ENCODE measurements at regions of chr3 and their contacts with region 1.

Region 1: DNA sequence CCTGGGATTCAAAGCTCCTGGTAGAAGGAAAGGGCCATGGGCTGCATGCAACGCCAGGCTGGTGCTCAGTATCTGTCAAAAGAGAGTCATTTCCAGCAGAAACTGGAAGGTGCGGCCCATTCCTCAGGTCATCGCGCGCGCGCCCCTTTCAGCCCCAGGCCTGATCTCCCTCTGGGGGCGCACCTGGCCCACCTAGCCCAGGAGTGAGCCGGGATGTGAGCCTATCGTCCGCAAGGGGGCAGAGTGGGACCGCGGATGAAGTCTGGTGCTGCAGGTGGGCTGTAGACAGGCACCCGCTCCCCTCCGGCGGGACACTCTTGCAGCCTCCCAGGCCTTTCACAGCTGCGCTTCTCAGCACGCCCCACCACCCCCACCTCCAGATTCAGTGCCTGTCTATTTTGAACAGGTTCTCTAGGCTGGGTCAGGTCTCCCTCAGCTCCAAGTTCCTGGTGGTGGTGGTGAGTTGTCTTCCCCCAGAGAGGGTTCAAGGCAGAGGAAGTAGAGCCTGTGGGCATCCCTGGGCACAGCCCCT is 5.8 kb upstream of the RPL29 start:
- DNase-seq: peak; percentile 92

Region 2: GRCh38 chr3:52014613-52015012 is 13.1 kb after region 1 on chr3:
- CTCF ChIA-PET with region 1: interaction called, 14 read pairs
- POLR2A ChIA-PET with region 1: no interaction called
- DNase-seq: peak; percentile 64

Region 3: DNA sequence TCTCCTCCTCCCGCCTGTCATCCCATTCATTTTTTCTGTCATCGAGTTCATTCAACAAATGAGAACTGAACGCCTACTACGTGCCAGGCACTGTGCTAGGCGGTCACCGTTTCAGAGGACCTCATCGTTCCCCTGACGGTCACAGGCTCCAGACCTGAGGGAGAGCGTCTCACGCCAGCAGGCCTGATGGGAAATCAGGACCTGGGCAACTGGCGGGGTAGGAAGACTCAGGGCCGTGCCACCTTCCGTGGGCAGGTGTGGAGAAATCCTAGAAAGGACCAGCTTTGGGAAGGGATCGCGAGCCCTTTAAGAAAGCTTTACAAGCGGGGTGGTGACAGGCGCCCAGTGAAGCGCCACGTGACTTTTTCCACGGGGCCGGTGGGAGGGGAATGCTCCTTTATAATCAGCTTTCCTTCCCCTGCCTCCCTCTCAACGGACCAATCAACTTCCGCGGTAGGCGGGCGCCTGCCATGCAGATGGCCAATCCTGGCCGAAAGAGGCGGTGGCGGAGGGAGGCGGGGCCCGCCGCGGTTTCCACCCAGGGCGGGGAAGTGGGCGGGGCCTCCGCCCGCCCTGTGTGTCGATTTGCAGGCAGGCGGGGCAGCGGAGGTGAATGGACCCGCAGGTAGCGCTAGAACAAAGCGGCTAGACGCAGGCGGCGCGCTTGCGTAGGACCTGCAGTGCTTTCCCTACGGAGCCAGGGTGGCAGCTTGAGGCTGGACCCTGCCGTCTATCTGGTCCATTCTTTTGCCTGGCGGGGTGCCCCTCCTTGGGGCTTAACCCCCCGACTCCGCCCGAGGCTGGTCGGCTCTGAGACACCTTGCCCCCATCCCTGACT is 55.7 kb after region 1 on chr3:
- CTCF ChIA-PET with region 1: interaction called, 31 read pairs
- POLR2A ChIA-PET with region 1: interaction called, 21 read pairs
- DNase-seq: peak; percentile 97

Region 4: DNA sequence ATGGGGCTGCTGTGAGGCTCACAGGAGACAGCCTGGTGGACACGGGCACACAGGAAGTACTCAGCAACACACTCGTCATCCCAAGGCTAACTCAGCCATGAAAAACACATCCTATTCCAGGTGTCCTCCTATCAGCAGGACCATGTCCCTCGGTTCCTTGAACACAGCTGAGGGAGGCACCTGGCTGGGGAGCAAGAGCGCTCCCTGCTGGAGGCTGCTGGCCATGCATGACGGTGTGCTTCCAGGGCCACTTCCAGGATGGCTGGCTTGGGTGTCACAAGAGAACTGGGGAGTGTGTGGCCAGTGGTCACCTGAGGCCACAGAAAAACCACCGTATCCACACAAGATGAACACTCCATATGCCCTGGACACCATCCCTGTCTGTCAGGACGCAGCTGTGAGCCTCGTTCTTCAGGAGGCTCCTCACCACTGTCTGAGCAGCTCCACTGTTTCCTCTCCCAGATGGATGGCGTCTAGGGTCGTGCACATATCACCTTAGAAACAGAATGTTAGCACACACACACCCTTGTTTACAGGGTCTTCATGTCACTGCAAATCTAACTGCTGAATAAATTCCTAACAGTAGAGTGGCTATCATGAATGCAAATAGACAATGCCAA is 121.7 kb after region 1 on chr3:
- CTCF ChIA-PET with region 1: interaction called, 20 read pairs
- POLR2A ChIA-PET with region 1: interaction called, 4 read pairs
- DNase-seq: peak; percentile 86

Region 5: DNA sequence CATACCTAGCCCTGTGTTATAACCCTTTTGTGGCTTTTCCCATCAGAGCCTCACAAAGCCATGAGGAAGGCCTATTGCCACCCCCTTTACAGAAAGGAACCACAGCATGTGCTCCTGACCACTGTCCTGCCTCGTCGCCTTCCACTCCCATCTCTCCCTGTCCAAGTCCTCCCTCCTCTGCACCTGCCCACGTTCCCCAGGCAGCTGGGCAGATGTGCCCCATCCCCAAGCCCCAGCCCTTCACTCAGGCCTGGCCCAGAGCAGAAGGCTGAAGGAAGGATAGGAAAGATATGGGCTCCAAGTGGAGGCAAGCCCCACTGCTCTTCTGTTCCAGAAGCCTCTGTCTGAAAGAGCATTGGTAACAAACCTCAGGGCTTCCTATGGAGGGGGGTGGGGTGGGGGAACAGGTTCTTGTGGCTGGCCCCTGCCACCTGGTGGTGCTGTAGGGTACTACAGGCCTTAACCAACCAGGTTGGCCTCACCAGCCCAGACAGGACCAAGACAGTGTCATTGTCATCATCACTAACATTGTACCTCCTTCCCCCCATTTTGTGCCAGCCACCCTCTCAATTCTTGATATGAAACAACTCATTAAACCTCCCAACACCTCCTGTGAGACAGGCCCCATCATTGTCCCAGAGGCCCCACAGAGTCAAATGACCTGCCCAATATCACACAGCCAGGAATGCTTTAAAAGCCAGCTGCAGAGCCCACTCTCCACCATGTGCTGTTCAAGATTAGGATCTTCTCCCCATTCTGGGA is 142.7 kb after region 1 on chr3:
- CTCF ChIA-PET with region 1: interaction called, 19 read pairs
- POLR2A ChIA-PET with region 1: interaction called, 3 read pairs
- DNase-seq: peak; percentile 85

Region 6: DNA sequence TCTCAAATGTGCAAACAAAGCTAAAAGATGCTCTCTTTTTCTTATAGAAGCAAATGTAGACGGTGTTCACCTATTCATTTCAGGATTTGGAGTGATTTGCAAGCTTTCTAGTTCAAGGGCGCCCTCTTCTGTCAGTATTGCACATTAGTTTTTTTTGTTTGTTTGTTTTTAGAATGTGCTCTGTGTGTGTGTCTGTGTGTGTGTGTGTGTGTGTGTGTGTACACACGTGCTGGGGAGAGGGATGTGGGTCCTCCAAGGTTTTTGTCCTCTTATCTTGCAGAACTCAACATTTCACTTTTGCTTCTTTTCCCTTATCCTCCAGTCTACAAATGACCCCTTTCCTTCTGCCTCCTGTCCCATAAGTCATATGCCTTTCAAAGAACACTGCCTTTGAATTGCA is 338.1 kb after region 1 on chr3:
- CTCF ChIA-PET with region 1: interaction called, 13 read pairs
- POLR2A ChIA-PET with region 1: no interaction called
- DNase-seq: peak; percentile 60

Measured in HEK293T (cell line).